ENCODE measurements at regions of chr19 and their contacts with region 1.

Region 1: DNA sequence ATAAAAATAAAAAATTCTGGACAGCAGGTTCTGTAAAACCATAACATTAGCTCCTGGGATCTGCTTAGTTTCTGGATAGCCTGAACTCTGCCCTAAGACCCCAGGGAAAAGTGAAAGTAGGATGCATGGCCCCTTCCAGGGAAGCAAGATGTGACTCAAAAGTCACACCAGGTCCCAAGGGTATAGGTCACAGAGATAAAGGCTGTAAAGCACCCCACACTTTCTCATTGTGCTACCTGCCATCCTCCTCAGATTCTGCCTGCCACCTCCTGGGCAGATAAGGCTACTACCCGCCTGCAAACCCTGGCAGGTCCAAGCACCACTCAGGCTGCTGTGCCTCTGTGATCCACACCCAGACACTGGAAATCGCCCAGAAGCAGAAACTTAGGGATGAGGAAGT is 20.6 kb downstream of the FFAR2 start:
- DNase-seq: peak; percentile 84
- ATAC-seq: peak; percentile 100
- H3K4me3 ChIP-seq: no peak overlapping the region
- H3K4me3 Mint-ChIP-seq: no peak overlapping the region
- H3K27ac ChIP-seq: no peak overlapping the region
- H3K27ac Mint-ChIP-seq: peak overlapping the region; percentile 23
- H3K4me1 ChIP-seq: peaks cover 2 to 12% of the 10 kb centered on the region in 2 donors
- H3K4me1 Mint-ChIP-seq: peaks cover 10% of the 10 kb centered on the region
- H3K27me3 ChIP-seq: no peaks in the 10 kb centered on the region
- H3K27me3 Mint-ChIP-seq: no peaks in the 10 kb centered on the region
- CTCF ChIP-seq: peak; percentile 84

Region 2: GRCh38 chr19:35154525-35155406 is 313.9 kb before region 1 on chr19 and contains the start of gene FXYD5:
- CTCF ChIA-PET with region 1: no interaction called
- POLR2A ChIA-PET with region 1: no interaction called
- intact Hi-C with region 1: loop called (anchors 10 kb)
- DNase-seq: peak; percentile 64
- ATAC-seq: peak; percentile 72
- H3K4me3 ChIP-seq: peak within 1 kb of the TSS; percentile 51 to 93 (median 90)
- H3K4me3 Mint-ChIP-seq: peak within 1 kb of the TSS; percentile 100
- H3K27ac ChIP-seq: peak within 1 kb of the TSS; percentile 43 to 85
- H3K27ac Mint-ChIP-seq: peak within 1 kb of the TSS; percentile 97
- H3K4me1 ChIP-seq: peaks cover 20 to 25% of the 10 kb centered on the region in 2 donors
- H3K4me1 Mint-ChIP-seq: peaks cover 49% of the 10 kb centered on the region
- H3K27me3 ChIP-seq: peaks cover 0 to 3% (median 0%) of the 10 kb centered on the region in 4 experiments
- H3K27me3 Mint-ChIP-seq: no peaks in the 10 kb centered on the region
- CTCF ChIP-seq: no peak
- total RNA-seq, gene FXYD5: 293 and 310 TPM in 2 replicates

Region 3: GRCh38 chr19:35306473-35307246 is 162.0 kb before region 1 on chr19:
- CTCF ChIA-PET with region 1: interaction called, 5 read pairs
- POLR2A ChIA-PET with region 1: no interaction called
- intact Hi-C with region 1: loop called (anchors 1 kb)
- DNase-seq: peak; percentile 58
- ATAC-seq: peak; percentile 62
- H3K4me3 ChIP-seq: no peak overlapping the region
- H3K4me3 Mint-ChIP-seq: peak overlapping the region; percentile 29
- H3K27ac ChIP-seq: no peak overlapping the region
- H3K27ac Mint-ChIP-seq: peak overlapping the region; percentile 65
- H3K4me1 ChIP-seq: peaks cover 21 to 42% of the 10 kb centered on the region in 2 donors
- H3K4me1 Mint-ChIP-seq: peaks cover 45% of the 10 kb centered on the region
- H3K27me3 ChIP-seq: no peaks in the 10 kb centered on the region
- H3K27me3 Mint-ChIP-seq: no peaks in the 10 kb centered on the region
- CTCF ChIP-seq: peak; percentile 33

Region 4: GRCh38 chr19:35352448-35353304 is 116.0 kb before region 1 on chr19:
- CTCF ChIA-PET with region 1: interaction called, 234 read pairs
- POLR2A ChIA-PET with region 1: interaction called, 6 read pairs
- intact Hi-C with region 1: no loop called
- DNase-seq: peak; percentile 86
- ATAC-seq: peak; percentile 66
- H3K4me3 ChIP-seq: no peak overlapping the region
- H3K4me3 Mint-ChIP-seq: no peak overlapping the region
- H3K27ac ChIP-seq: no peak overlapping the region
- H3K27ac Mint-ChIP-seq: peak overlapping the region; percentile 39
- H3K4me1 ChIP-seq: peaks cover 31 to 44% of the 10 kb centered on the region in 2 donors
- H3K4me1 Mint-ChIP-seq: peaks cover 35% of the 10 kb centered on the region
- H3K27me3 ChIP-seq: no peaks in the 10 kb centered on the region
- H3K27me3 Mint-ChIP-seq: peaks cover 9% of the 10 kb centered on the region
- CTCF ChIP-seq: peak; percentile 82

Region 5: DNA sequence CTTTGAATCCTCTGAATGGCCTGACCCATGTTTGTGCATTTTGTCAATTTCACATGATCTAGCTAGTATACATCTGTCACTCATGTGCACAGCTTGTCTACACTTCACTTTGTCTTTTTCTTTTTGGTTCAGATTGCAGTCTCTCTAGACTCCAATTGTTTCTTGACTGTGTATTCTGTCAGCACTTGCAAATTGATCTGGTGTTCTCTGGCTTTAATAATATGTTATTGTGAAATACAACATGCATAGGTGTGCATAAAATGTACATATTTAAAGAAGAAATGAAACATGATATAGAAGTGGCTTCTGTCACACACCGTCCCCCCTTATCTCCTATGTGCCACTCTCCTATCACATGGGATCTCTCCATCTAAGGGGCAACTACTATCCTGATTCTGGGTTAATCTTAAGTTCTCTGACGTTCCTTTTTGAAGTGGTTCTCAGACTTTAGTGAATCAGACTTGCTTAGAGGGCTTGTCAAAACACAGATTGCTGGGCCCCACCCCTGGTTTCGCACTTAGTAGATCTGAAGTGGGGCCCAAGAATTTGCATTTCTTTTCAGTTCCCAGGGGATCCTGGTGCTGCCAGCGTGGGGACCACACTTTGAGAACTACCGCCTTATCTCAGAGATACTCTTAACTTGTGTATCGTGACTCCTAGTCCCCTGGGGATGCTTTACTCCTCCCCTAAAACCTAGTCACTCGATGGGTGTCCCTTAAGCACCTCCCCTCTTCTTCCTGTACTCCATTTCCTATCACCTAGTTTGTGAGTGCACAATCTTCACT is 15.8 kb after region 1 on chr19:
- CTCF ChIA-PET with region 1: interaction called, 12 read pairs
- POLR2A ChIA-PET with region 1: no interaction called
- intact Hi-C with region 1: no loop called
- DNase-seq: peak; percentile 82
- ATAC-seq: peak; percentile 98
- H3K4me3 ChIP-seq: peak overlapping the region in 2 of 5 experiments; percentile 2 to 18
- H3K4me3 Mint-ChIP-seq: peak overlapping the region; percentile 56
- H3K27ac ChIP-seq: no peak overlapping the region
- H3K27ac Mint-ChIP-seq: no peak overlapping the region
- H3K4me1 ChIP-seq: peaks cover 19 to 20% of the 10 kb centered on the region in 2 donors
- H3K4me1 Mint-ChIP-seq: peaks cover 14% of the 10 kb centered on the region
- H3K27me3 ChIP-seq: no peaks in the 10 kb centered on the region
- H3K27me3 Mint-ChIP-seq: no peaks in the 10 kb centered on the region
- CTCF ChIP-seq: no peak